Activated T-helper 1 cell treated with anti-CD3 and anti-CD28 coated beads, Interleukin-12 subunit alpha, Interleukin-12 subunit beta, Interleukin-2, Interleukin-4 antibody, amounts not matched to agents 30 ng/mL and 10 ng/mL and 1 ng/mL, durations not matched to agents 14 hours and 24 hours and 36 hours (primary cell): ENCODE measurements at regions of chrX and their contacts with region 1.

Region 1: DNA sequence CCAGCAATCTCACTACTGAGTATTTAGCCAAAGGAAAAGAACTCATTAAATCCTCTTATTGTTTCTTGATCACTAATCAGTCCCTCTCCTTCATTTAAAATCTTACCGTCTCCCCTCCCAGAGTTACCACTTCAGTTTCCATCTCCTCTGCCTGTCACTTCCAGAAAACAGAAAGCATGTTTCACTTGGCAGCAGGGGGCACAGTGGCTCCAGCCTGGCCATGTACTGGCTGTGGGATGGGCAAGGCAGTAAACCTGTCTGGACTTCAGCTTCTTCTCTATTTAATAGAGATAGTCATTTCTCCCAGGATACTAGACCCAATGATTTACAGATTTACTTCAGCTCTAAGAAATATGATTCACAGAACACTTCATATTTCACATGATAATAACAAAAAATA is 63.2 kb downstream of the CD40LG start:
- DNase-seq: no peak
- H3K4me3 Mint-ChIP-seq: no peak overlapping the region
- H3K27ac Mint-ChIP-seq: peak overlapping the region; percentile 91
- H3K4me1 Mint-ChIP-seq: peaks cover 51% of the 10 kb centered on the region
- H3K27me3 Mint-ChIP-seq: no peaks in the 10 kb centered on the region

Region 2: DNA sequence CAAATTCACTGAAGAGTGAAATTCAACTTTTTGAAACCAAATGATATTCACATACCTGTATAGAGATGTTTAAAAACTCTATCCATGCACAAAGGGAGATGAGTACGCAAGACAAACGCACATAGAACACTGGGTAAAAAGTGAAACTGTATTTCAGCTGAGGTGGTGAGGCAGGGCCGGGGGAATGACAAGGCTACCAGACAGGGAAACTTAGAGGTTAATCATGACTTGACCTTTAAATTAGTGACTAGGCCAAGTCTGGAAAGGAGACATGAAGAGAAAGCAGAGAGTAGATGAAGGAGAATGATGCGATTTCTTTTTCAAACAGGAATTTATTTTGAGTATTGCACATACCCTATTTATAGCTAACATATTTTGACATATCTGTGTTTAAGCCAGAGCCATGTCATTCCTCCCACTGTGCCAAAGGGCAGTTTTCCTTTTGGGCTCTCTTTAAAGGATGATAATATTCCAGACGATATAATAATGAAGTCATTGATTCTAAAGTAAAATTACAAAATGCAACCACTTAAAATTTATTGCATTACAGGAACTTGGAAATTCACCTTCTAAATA is 20.1 kb after region 1 on chrX:
- intact Hi-C with region 1: loop called (anchors 2 kb)
- DNase-seq: no peak
- H3K4me3 Mint-ChIP-seq: peak overlapping the region; percentile 45
- H3K27ac Mint-ChIP-seq: peak overlapping the region; percentile 70
- H3K4me1 Mint-ChIP-seq: peaks cover 48% of the 10 kb centered on the region
- H3K27me3 Mint-ChIP-seq: no peaks in the 10 kb centered on the region

Region 3: DNA sequence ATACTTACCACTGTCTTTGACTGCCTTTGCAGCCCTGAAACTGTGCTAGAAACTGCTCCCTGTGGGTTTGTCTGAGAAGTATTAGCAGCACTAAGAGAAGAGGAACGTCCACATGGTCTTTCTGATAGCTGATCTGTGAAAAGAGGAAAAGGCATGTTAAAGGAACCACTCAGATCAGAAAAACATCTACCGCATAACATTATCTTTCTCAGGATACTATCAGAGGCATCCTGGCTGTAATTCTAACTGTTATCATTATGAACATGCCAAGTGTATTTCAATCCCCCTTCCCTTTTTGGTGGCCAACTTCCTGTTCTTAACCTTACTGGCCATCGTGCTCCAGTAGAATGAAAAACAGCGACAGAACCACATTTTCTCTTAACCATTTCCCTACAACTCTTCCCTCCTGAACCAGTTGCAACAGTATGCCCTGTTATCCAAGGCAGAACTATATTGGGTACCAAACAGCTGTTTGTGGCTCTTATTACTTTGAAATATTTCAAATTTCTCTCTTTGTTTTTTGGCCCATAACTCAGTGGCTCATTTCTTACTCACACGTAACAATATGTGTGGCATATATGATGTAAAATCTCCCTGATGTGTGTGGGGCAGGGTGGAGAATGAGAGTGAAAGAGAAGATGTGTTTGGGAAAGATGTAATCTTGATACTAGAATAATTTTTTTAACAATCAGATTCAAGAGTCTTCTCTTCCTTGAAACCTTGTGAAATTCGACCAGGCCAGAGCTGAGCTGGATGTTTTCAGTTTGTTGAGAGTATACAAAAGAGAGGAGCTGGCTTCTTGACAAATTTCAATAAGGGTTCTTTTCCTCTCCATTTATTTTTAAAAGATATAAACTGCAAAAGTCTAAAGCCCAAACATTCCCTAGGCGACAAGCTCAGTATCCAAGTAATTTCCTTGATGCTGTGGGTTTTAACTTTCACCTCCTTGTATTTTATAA is 34.3 kb after region 1 on chrX:
- intact Hi-C with region 1: loop called (anchors 2 kb)
- DNase-seq: no peak
- H3K4me3 Mint-ChIP-seq: peak overlapping the region; percentile 59
- H3K27ac Mint-ChIP-seq: peak overlapping the region; percentile 79
- H3K4me1 Mint-ChIP-seq: peaks cover 79% of the 10 kb centered on the region
- H3K27me3 Mint-ChIP-seq: no peaks in the 10 kb centered on the region

Region 4: GRCh38 chrX:136880452-136881013 is 169.4 kb after region 1 on chrX and contains the start of gene RBMX:
- intact Hi-C with region 1: loop called (anchors 1 kb)
- DNase-seq: peak; percentile 84
- H3K4me3 Mint-ChIP-seq: peak within 1 kb of the TSS; percentile 98
- H3K27ac Mint-ChIP-seq: peak within 1 kb of the TSS; percentile 99
- H3K4me1 Mint-ChIP-seq: peaks cover 6% of the 10 kb centered on the region
- H3K27me3 Mint-ChIP-seq: no peaks in the 10 kb centered on the region
- total RNA-seq, gene RBMX: 308 and 327 TPM in 2 replicates

Region 5: GRCh38 chrX:137051978-137052642 is 341.0 kb after region 1 on chrX:
- intact Hi-C with region 1: loop called (anchors 10 kb)
- DNase-seq: peak; percentile 71
- H3K4me3 Mint-ChIP-seq: peak overlapping the region; percentile 87
- H3K27ac Mint-ChIP-seq: peak overlapping the region; percentile 40
- H3K4me1 Mint-ChIP-seq: peaks cover 11% of the 10 kb centered on the region
- H3K27me3 Mint-ChIP-seq: peaks cover 28% of the 10 kb centered on the region